Activated CD4-positive, alpha-beta T cell treated with anti-CD3 and anti-CD28 coated beads for 36 hours (primary cell): ENCODE measurements at regions of chr6 and their contacts with region 1.

Region 1: DNA sequence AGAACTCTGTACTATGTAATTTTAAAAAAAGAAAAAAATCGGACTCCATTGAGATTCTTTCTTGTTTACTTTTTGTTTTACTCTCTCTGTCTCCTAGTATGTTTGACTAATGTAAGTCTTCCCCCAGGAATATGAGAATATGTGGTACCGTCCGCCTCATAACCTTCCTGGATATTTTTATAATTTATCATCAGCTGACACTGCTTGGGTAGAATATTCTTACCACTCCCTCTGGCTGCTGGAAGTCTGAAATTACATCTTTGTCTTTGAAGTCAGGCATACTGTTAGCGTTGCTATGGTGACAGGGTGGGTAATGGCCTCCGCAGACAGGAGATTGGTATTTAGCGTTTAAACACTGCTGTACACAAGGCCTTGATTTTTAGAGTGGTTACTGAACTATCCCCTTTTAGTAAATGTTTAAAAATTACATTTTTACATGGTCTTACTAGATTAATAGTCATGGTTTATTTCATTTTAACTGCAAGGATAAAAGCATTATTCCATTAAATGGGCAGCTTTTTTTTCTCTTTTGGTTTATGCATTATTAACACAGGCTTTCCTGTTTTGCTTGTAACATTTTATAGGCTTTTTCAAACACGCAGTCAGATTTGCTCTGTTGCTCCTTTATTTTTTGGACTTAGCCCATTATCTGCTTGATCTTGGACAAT is 176.4 kb downstream of the ARID1B start:
- DNase-seq: peak; percentile 48
- ATAC-seq: peak; percentile 44
- H3K4me3 Mint-ChIP-seq: no peak overlapping the region
- H3K27ac Mint-ChIP-seq: peak overlapping the region; percentile 43
- H3K4me1 Mint-ChIP-seq: peaks cover 66% of the 10 kb centered on the region
- H3K27me3 Mint-ChIP-seq: no peaks in the 10 kb centered on the region

Region 2: GRCh38 chr6:156564127-156564806 is 389.3 kb before region 1 on chr6:
- CTCF ChIA-PET with region 1: no interaction called
- POLR2A ChIA-PET with region 1: no interaction called
- intact Hi-C with region 1: loop called (anchors 10 kb)
- DNase-seq: peak; percentile 89
- ATAC-seq: peak; percentile 98
- H3K4me3 Mint-ChIP-seq: no peak overlapping the region
- H3K27ac Mint-ChIP-seq: no peak overlapping the region
- H3K4me1 Mint-ChIP-seq: peaks cover 7% of the 10 kb centered on the region
- H3K27me3 Mint-ChIP-seq: peaks cover 3% of the 10 kb centered on the region

Region 3: GRCh38 chr6:156933201-156934068 is 20.2 kb before region 1 on chr6:
- CTCF ChIA-PET with region 1: interaction called, 7 read pairs
- POLR2A ChIA-PET with region 1: interaction called, 5 read pairs
- intact Hi-C with region 1: loop called (anchors 1 to 2 kb)
- DNase-seq: no peak
- ATAC-seq: no peak
- H3K4me3 Mint-ChIP-seq: no peak overlapping the region
- H3K27ac Mint-ChIP-seq: peak overlapping the region; percentile 2
- H3K4me1 Mint-ChIP-seq: peaks cover 77% of the 10 kb centered on the region
- H3K27me3 Mint-ChIP-seq: no peaks in the 10 kb centered on the region